ENCODE measurements at regions of chr11 and their contacts with region 1.

Region 1: DNA sequence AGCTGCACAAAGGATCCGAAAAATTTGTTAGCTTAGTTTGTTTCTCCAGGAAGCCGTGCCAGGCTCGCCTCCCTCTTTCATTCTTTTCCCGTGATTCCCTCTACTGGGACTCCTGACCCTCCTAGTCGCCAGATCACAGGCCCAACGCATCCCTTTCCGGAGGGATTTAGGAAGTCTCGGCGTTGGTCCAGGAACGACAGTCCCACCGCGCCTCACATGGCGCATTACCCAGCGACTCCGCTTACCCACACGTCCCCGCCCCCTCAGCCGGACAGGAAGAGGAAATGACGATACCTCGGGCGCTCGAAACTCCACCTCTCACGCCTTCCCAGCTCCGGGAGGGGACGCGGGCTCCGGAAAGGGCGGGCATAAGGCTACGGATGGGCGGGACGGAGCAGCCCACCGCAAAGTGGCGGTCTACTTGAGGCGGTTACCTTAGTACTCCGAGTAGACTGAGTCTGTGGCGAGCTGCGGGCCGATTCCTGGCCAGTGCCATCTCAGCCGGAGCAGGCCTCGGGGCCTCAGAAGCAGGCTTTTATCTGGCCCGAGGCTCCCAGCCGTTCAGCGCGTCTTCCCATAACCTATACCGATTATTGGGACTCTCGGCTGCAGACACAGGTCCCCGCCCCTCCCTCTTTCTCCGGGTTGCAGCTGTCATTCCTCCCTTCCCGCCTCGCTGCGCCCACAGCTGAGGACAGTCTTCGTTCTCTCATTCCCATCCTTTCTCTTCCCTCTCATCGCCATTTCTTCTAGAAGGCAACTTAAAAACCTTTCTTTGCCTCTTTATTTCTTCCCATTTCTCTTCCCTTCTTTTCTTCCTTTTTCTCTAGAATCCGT is at the start of gene CCDC15:
- DNase-seq: peak; percentile 99
- ATAC-seq: peak; percentile 100
- H3K4me3 ChIP-seq: peak within 1 kb of the TSS; percentile 41 to 49
- H3K27ac ChIP-seq: peak within 1 kb of the TSS in 1 of 2 donors; percentile 64
- H3K4me1 ChIP-seq: no peaks in the 10 kb centered on the region
- H3K27me3 ChIP-seq: no peaks in the 10 kb centered on the region
- total RNA-seq, gene CCDC15: 0.97 to 1.5 TPM

Region 2: GRCh38 chr11:125111343-125112207 is 157.6 kb after region 1 on chr11 and contains the start of gene TMEM218:
- intact Hi-C with region 1: loop called in 1 of 2 experiments (anchors 10 kb)
- DNase-seq: peak; percentile 100
- ATAC-seq: peak; percentile 100
- H3K4me3 ChIP-seq: peak within 1 kb of the TSS; percentile 67 to 78
- H3K27ac ChIP-seq: peak within 1 kb of the TSS in 1 of 2 donors; percentile 53
- H3K4me1 ChIP-seq: peaks cover 0 to 3% of the 10 kb centered on the region in 2 donors
- H3K27me3 ChIP-seq: no peaks in the 10 kb centered on the region
- total RNA-seq, gene TMEM218: 9.9 to 16.9 TPM

Region 3: GRCh38 chr11:125141686-125142535 is 187.9 kb after region 1 on chr11:
- intact Hi-C with region 1: loop called in 1 of 2 experiments (anchors 5 kb)
- DNase-seq: peak; percentile 57 to 88
- ATAC-seq: peak; percentile 82
- H3K4me3 ChIP-seq: no peak overlapping the region
- H3K27ac ChIP-seq: no peak overlapping the region
- H3K4me1 ChIP-seq: no peaks in the 10 kb centered on the region
- H3K27me3 ChIP-seq: no peaks in the 10 kb centered on the region

Region 4: GRCh38 chr11:125345421-125346178 is 391.6 kb after region 1 on chr11:
- intact Hi-C with region 1: loop called in 1 of 2 experiments (anchors 5 kb)
- DNase-seq: peak; percentile 86 to 92
- ATAC-seq: peak; percentile 86
- H3K4me3 ChIP-seq: no peak overlapping the region
- H3K27ac ChIP-seq: no peak overlapping the region
- H3K4me1 ChIP-seq: no peaks in the 10 kb centered on the region
- H3K27me3 ChIP-seq: no peaks in the 10 kb centered on the region

Region 5: DNA sequence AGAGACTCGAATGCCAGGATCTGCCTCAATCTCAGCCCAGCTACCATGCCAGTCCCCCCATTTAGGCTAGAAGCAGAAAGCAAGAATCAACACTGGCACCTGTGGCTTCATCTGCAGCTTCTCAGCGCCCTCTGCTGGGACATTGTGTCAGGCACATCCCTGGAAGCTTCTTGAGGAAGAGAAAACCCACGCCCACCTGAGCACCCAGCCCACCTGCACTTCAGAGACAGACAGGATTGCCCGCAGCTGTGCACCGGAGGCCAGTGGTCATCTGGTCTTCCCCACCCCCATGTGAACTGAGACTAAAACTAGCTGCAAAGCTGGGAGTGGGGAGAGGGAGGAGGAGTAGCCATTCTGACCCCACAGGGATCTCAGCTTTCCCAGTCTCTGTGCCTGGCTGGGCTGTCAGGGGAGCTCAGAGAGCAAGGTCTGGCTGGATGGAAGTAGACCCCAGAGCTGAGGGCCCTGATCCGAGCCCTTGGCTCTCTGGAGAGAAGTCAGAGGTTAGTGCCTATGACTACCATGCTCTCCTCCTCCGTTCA is 475.3 kb after region 1 on chr11:
- intact Hi-C with region 1: loop called (anchors 10 kb)
- DNase-seq: peak in 1 of 2 donors; percentile 81
- ATAC-seq: no peak
- H3K4me3 ChIP-seq: no peak overlapping the region
- H3K27ac ChIP-seq: no peak overlapping the region
- H3K4me1 ChIP-seq: no peaks in the 10 kb centered on the region
- H3K27me3 ChIP-seq: no peaks in the 10 kb centered on the region

Region 6: DNA sequence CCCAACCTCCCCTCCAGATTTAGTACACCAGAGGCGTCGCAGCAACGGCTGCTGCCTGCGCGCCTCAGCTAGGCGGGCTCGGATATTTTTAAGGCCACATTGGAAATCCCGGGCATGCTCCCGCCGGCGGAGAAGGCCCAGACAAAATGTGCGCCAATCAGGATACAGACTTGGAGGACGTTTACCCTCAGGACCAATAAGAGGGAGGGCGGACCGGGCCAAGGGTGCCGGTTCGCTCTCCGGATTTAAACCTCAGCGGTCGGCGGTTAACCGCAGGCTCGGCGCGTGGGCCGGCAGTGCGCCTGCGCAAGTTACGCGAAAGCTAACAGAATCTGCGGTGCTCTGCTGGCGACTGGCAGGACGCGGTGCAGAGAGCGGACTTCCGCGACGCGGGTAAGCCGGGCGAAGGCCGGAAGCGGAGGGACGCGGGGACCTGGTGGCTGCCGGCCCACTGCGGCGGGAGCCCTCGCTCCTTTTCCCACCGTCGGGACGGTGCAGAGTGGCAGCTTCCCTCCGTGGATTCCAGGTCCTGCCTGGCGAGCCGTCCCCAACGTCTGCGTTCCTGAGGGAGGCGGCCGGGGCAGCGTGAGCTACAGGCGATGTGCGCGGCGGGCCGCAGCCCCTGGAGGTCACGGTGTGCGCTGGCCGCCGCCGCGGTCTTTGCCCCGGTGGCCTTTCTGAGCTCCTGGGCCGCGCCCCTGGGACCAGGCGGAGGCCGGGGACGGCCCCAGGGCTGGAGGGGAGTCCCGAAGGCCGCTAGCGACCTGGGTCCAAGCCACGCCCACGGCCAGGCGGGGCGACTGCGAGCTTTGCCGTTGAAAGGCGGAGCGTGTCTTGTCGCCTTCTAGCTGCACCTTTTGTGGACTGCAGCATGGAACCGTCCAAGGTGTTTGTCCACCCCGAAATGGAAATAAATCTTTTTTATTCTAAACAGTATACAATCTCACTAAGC is 933.7 kb after region 1 on chr11 and contains the start of gene HYLS1:
- intact Hi-C with region 1: loop called in 1 of 2 experiments (anchors 10 kb)
- DNase-seq: peak; percentile 96 to 98
- ATAC-seq: peak; percentile 99
- H3K4me3 ChIP-seq: peak within 1 kb of the TSS; percentile 79 to 93
- H3K27ac ChIP-seq: peak within 1 kb of the TSS; percentile 15 to 86
- H3K4me1 ChIP-seq: no peaks in the 10 kb centered on the region
- H3K27me3 ChIP-seq: no peaks in the 10 kb centered on the region
- total RNA-seq, gene HYLS1: 3.3 to 3.6 TPM

Measured in aorta (tissue), 5 donors.